Mammary epithelial cell (primary cell): ENCODE measurements at regions of chr22 and their contacts with region 1.

Region 1: GRCh38 chr22:26589845-26590736 is at the start of gene TPST2:
- DNase-seq: peak; percentile 68
- H3K4me3 ChIP-seq: peak within 1 kb of the TSS; percentile 62 to 84 (median 76)
- H3K27ac ChIP-seq: peak within 1 kb of the TSS; percentile 48
- H3K4me1 ChIP-seq: peaks cover 21% of the 10 kb centered on the region
- H3K27me3 ChIP-seq: no peaks in the 10 kb centered on the region
- CTCF ChIP-seq: peak in 1 of 2 donors; percentile 36
- total RNA-seq, gene TPST2: 18.8 to 62.5 TPM

Region 2: DNA sequence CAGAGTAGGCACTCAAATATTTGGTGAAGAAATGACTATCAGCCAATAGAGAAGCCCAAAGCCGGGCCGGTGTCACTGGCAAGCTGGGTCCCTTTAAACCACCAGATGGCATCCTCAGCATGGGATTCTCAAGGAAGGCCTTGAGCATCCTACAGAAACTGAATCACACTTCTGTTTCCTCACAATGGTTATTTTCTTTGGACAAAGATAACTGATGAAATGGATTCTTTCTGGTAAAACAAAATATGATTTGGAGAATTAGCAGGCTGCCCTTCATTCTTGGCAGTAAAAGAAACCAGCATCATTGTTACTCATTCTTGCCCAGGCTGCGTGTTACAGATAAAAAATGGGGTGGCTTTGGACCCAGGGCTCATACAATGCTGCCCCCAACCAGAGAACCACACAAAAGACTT is 191.3 kb before region 1 on chr22:
- CTCF ChIA-PET with region 1: no interaction called
- dilution Hi-C with region 1: no loop called
- in situ Hi-C with region 1: no loop called
- intact Hi-C with region 1: loop called (anchors 2 kb)
- DNase-seq: peak; percentile 55
- H3K4me3 ChIP-seq: no peak overlapping the region
- H3K27ac ChIP-seq: no peak overlapping the region
- H3K4me1 ChIP-seq: no peaks in the 10 kb centered on the region
- H3K27me3 ChIP-seq: no peaks in the 10 kb centered on the region
- CTCF ChIP-seq: peak; percentile 84

Region 3: GRCh38 chr22:26502688-26503561 is 87.2 kb before region 1 on chr22:
- CTCF ChIA-PET with region 1: no interaction called
- dilution Hi-C with region 1: no loop called
- in situ Hi-C with region 1: no loop called
- intact Hi-C with region 1: loop called (anchors 1 kb)
- DNase-seq: peak; percentile 20
- H3K4me3 ChIP-seq: no peak overlapping the region
- H3K27ac ChIP-seq: no peak overlapping the region
- H3K4me1 ChIP-seq: no peaks in the 10 kb centered on the region
- H3K27me3 ChIP-seq: no peaks in the 10 kb centered on the region
- CTCF ChIP-seq: peak; percentile 47 to 63

Region 4: GRCh38 chr22:26511857-26512793 is 78.0 kb before region 1 on chr22 and contains the start of gene TFIP11:
- CTCF ChIA-PET with region 1: no interaction called
- dilution Hi-C with region 1: no loop called
- in situ Hi-C with region 1: loop called in 1 of 2 experiments (anchors 5 kb)
- intact Hi-C with region 1: no loop called
- DNase-seq: peak; percentile 87
- H3K4me3 ChIP-seq: peak within 1 kb of the TSS; percentile 73 to 100 (median 84)
- H3K27ac ChIP-seq: peak within 1 kb of the TSS; percentile 71
- H3K4me1 ChIP-seq: peaks cover 10% of the 10 kb centered on the region
- H3K27me3 ChIP-seq: no peaks in the 10 kb centered on the region
- CTCF ChIP-seq: peak in 1 of 2 donors; percentile 12
- total RNA-seq, gene TFIP11: 35.7 to 38.3 TPM

Region 5: DNA sequence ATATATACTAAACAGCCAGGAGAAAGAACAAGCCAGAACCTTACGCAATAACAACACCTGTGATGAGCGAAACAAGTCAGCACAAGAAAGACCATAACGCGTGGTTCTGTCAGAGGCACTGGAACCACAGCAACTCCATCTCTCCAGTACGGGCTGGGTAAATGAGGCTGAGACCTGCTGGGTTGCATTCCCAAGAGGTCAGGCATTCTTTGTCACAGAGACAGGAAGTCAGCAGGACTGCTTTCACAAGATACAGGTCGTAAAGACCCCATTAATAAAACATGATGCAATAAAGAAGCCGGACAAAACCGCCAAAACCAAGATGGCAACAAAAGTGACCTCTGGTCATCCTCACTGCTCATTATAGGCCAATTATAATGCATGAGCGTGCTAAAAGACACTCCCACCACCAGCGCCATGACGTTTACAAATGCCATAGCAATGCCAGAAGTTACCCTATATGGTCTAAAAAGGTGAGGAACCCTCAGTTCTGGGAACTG is 21.8 kb before region 1 on chr22:
- CTCF ChIA-PET with region 1: no interaction called
- dilution Hi-C with region 1: no loop called
- in situ Hi-C with region 1: no loop called
- intact Hi-C with region 1: loop called (anchors 2 kb)
- DNase-seq: peak; percentile 97
- H3K4me3 ChIP-seq: no peak overlapping the region
- H3K27ac ChIP-seq: peak overlapping the region; percentile 71
- H3K4me1 ChIP-seq: peaks cover 45% of the 10 kb centered on the region
- H3K27me3 ChIP-seq: no peaks in the 10 kb centered on the region
- CTCF ChIP-seq: no peak

Region 6: DNA sequence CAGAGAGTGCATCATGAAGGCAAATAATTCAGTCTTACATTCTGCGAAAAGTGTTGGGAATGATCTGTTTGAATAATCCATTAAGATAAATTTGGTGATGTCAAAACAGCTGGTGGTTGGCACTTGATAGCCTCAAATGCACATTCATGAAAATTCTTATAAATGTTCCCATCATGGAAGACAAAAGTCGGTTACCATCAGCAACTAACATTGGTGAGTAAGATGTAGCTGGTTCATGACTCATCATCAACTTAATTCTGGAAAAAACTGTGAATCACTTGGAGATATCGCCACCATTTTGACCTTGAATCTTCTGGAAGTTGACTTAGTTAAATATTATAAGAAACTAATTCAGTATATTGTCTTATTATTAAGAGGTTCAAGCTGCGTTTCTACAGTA is 16.5 kb after region 1 on chr22:
- CTCF ChIA-PET with region 1: no interaction called
- dilution Hi-C with region 1: no loop called
- in situ Hi-C with region 1: no loop called
- intact Hi-C with region 1: no loop called
- DNase-seq: peak; percentile 26
- H3K4me3 ChIP-seq: no peak overlapping the region
- H3K27ac ChIP-seq: no peak overlapping the region
- H3K4me1 ChIP-seq: no peaks in the 10 kb centered on the region
- H3K27me3 ChIP-seq: no peaks in the 10 kb centered on the region
- CTCF ChIP-seq: no peak